HEK293 (cell line): ENCODE measurements at regions of chr12 and their contacts with region 1.

Region 1: DNA sequence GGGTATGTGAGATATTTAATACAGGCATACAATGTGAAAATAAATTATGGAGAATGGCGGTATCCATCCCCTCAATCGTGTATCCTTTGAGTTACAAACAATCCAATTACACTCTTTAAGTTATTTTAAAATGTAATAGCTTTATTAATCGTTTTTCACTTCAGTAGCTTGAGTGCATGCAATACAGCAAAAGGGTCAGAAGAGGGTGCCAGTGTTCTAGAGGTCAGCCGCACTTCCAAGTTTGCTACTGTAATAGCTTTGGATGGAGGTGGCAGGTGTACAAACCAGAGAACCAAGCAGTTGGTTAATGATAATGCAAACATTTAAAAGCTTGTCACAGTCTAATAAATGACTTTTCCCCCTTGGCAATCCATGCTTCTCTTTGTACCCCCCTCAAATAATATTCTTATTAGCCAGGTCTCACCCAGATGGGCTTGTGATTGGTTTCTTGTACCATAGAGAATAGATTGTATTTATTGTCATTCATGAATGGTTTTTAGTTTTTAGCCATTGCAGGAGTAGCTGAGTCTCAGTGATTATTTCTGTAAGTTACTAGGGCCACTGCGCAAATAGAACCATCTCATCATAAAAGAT is 127.0 kb downstream of the ERC1 start:
- H3K4me3 ChIP-seq: no peak overlapping the region
- H3K27ac ChIP-seq: no peak overlapping the region
- H3K4me1 ChIP-seq: no peaks in the 10 kb centered on the region
- CTCF ChIP-seq: peak; percentile 75

Region 2: DNA sequence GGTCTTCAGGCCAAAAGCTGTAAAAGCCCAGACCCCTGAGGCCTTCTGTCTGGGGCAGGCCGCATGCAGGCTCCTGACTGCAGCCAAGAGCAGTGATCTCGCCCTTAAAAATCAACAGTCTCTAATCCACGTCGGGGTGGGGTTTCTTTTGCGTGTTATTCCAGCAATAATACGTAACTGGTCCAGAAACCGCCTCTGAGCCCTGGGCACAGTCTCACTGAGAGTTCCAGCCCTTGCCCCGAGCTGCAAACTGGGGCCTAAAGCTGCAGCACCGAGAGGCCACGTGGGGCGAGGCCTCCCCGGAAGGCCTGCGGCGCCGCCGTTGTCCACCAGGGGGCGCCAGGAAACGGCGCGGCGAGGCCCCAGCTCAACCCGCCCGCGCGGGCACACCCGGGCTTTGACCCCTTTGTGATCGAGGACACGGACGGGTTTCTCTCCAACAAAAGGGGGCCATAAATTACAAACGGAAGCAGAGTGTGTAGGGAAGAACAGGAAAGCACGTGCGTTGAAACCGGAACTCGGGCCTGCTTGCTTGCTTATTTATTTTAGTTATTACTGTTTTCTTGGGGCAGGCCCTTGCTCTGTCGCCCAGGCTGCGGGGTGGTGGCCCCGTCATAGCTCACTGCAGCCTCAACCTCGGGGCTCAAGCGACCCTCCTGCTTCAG is 542.0 kb before region 1 on chr12:
- CTCF ChIA-PET with region 1: no interaction called
- POLR2A ChIA-PET with region 1: no interaction called
- H3K4me3 ChIP-seq: no peak overlapping the region
- H3K27ac ChIP-seq: peak overlapping the region; percentile 65
- H3K4me1 ChIP-seq: peaks cover 9% of the 10 kb centered on the region
- CTCF ChIP-seq: peak; percentile 96

Region 3: GRCh38 chr12:1130164-1130563 is 12.1 kb after region 1 on chr12:
- CTCF ChIA-PET with region 1: interaction called, 22 read pairs
- POLR2A ChIA-PET with region 1: no interaction called
- H3K4me3 ChIP-seq: no peak overlapping the region
- H3K27ac ChIP-seq: peak overlapping the region; percentile 37; the same call in 1 of the 2 replicates
- H3K4me1 ChIP-seq: peaks cover 8% of the 10 kb centered on the region
- CTCF ChIP-seq: no peak

Region 4: GRCh38 chr12:1162081-1162760 is 44.2 kb after region 1 on chr12:
- CTCF ChIA-PET with region 1: interaction called, 10 read pairs
- POLR2A ChIA-PET with region 1: no interaction called
- H3K4me3 ChIP-seq: no peak overlapping the region
- H3K27ac ChIP-seq: no peak overlapping the region
- H3K4me1 ChIP-seq: peaks cover 10% of the 10 kb centered on the region; the same call in 1 of the 2 replicates
- CTCF ChIP-seq: no peak

Region 5: GRCh38 chr12:1474041-1474573 is 356.0 kb after region 1 on chr12:
- CTCF ChIA-PET with region 1: interaction called, 13 read pairs
- POLR2A ChIA-PET with region 1: no interaction called
- H3K4me3 ChIP-seq: no peak overlapping the region
- H3K27ac ChIP-seq: peak overlapping the region; percentile 71
- H3K4me1 ChIP-seq: peaks cover 22% of the 10 kb centered on the region
- CTCF ChIP-seq: no peak

Region 6: GRCh38 chr12:1605129-1606020 is 487.3 kb after region 1 on chr12:
- CTCF ChIA-PET with region 1: interaction called, 10 read pairs
- POLR2A ChIA-PET with region 1: no interaction called
- H3K4me3 ChIP-seq: peak overlapping the region; percentile 47
- H3K27ac ChIP-seq: peak overlapping the region; percentile 78
- H3K4me1 ChIP-seq: peaks cover 6% of the 10 kb centered on the region; the same call in 1 of the 2 replicates
- CTCF ChIP-seq: peak; percentile 97